Tibial artery (tissue), 4 donors: ENCODE measurements at regions of chr16 and their contacts with region 1.

Region 1: DNA sequence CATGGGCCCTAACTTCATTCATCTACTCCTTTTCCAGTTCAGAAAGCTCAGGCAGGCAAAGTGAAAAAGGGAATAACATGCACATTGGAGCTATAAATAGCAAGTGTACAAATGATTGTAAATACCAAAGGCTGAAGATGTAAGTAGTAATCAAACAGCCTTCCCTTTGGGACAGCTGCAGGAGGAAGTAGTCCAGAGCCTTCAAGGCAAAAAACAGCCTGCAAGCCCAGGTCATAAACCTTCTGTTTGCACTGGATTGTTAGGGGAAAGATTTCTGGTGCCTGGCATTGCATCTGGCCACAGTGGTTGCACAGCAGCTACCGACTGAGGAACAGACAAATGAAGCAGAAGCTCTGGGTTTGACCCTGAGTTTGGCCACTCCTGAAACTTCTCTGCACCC is 98.6 kb upstream of the PMFBP1 start:
- DNase-seq: no peak
- H3K4me3 ChIP-seq: no peak overlapping the region
- H3K27ac ChIP-seq: no peak overlapping the region
- H3K4me1 ChIP-seq: no peaks in the 10 kb centered on the region
- H3K27me3 ChIP-seq: no peaks in the 10 kb centered on the region
- CTCF ChIP-seq: no peak

Region 2: GRCh38 chr16:72221630-72222024 is 48.9 kb before region 1 on chr16:
- intact Hi-C with region 1: no loop called
- DNase-seq: no peak
- H3K4me3 ChIP-seq: no peak overlapping the region
- H3K27ac ChIP-seq: no peak overlapping the region
- H3K4me1 ChIP-seq: no peaks in the 10 kb centered on the region
- H3K27me3 ChIP-seq: no peaks in the 10 kb centered on the region
- CTCF ChIP-seq: no peak

Region 3: GRCh38 chr16:72332926-72333325 is 62.4 kb after region 1 on chr16:
- intact Hi-C with region 1: loop called (anchors 10 kb)
- DNase-seq: no peak
- H3K4me3 ChIP-seq: no peak overlapping the region
- H3K27ac ChIP-seq: no peak overlapping the region
- H3K4me1 ChIP-seq: no peaks in the 10 kb centered on the region
- H3K27me3 ChIP-seq: no peaks in the 10 kb centered on the region
- CTCF ChIP-seq: no peak